Motor neuron (in vitro differentiated cells): ENCODE measurements at regions of chr21 and their contacts with region 1.

Region 1: DNA sequence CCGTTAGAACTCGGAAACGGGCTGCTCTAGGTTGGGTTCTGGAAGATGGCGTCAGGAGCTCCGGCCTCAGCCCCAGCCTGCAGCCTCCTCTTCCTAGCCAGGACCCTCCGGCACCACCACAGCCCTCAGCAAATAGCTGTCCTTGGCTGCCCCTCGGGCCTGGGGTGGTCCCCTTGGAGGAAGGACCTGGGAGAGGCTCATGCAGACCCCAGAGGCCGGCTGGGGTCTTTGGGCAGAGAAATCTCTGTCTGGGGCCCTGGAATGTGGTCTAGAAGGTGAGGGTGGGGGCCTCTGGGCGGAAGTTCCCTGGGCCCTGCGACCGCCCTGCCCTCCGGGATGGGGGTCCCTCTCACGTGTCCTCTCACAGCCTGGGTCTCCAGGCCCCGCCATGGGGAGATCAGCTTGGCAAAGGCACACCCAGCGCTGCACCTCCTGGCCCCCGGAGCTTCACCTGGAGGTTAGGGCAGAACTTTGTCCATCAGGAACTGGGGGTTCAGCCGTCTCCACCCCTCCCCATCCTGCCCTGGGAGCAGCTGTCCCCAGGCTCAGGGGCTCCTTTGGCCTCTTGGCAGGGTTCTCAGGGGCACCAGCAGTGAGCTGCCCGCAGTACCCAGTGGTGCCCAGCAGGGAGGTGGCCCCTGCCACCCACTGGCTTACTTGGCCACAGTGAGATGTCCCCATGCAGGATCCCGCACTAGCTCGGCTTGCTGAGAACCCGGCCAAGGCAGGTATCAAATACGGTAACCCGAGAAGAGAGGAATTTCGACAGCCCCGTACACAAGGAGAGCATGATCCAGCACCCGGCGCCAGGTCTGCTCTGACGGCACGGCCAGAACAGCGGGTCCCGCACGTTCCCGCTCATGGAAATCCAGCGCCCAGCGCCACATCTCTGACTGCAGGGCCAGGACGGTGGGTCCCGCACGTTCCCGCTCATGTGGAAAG is 36.6 kb downstream of the RRP1 start:
- ATAC-seq: peak in 1 of 8 experiments; percentile 45
- H3K4me3 ChIP-seq: no peak overlapping the region
- H3K27ac ChIP-seq: no peak overlapping the region
- H3K4me1 ChIP-seq: no peaks in the 10 kb centered on the region

Region 2: DNA sequence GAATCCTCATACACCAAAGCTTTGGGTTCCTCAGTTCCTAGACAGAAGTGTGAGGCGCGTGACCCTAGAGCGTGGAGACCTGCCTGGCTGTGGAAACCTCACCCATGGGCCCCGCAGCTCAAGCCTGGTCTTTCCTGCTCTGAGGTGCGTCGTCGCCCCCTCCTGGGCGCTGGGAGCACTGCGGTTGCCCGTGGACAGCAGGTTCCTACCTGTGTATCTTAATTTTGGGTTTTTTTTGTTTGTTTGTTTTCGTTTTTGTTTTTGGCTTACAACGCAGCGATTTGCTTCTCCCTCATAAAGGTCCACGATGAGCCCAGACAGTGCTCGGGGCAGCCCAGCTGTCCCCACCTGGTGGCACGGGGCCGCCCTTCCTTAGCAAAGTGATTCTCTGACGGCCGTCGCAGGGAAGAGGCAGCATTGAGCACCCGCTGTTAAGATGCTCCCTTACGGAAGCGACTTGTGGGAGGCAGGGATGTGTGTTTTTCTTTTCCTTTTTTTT is 149.6 kb after region 1 on chr21:
- in situ Hi-C with region 1: loop called in 1 of 9 experiments (anchors 25 kb)
- ATAC-seq: peak; percentile 36 to 90 (median 86)
- H3K4me3 ChIP-seq: no peak overlapping the region
- H3K27ac ChIP-seq: no peak overlapping the region
- H3K4me1 ChIP-seq: no peaks in the 10 kb centered on the region